Heart left ventricle (tissue), 16 donors: ENCODE measurements at regions of chr3 and their contacts with region 1.

Region 1: GRCh38 chr3:20039766-20040475 is at the start of gene KAT2B:
- DNase-seq: peak; percentile 84 to 92 (median 85)
- ATAC-seq: peak; percentile 68 to 84 (median 78)
- H3K4me3 ChIP-seq: peak within 1 kb of the TSS; percentile 59 to 95 (median 85)
- H3K27ac ChIP-seq: peak within 1 kb of the TSS; percentile 93 to 99 (median 98)
- H3K4me1 ChIP-seq: peaks cover 4 to 51% (median 40%) of the 10 kb centered on the region in 12 donors
- H3K27me3 ChIP-seq: no peaks in the 10 kb centered on the region
- CTCF ChIP-seq: peak; percentile 57 to 89 (median 71)
- POLR2A ChIP-seq: peak in 1 of 2 donors; percentile 48
- total RNA-seq, gene KAT2B: 45.9 to 82.8 (median 70.2) TPM

Region 2: DNA sequence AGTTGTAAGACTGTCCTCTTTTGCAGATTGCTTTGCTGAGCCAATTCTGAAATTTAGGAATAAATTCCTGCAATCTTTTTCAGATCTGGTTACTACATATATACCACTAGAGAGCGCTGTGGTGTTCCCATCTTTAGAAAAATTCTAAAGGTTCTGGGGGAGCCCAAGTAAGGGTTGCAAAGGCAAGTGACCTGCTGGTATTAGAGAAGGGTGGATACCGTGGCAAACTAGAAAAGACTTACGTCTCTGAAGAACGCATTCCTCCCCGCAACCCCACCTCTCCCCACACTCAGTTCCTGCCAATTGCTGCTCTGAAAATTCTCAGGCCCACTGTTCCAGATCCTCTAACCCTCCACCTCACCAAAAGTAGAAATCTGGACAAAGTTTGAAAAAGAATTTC is 154.5 kb before region 1 on chr3:
- intact Hi-C with region 1: loop called in 6 of 10 experiments (anchors 5 to 10 kb)
- DNase-seq: no peak
- ATAC-seq: peak in 1 of 4 donors; percentile 29
- H3K4me3 ChIP-seq: no peak overlapping the region
- H3K27ac ChIP-seq: no peak overlapping the region
- H3K4me1 ChIP-seq: peaks cover 0 to 18% (median 8%) of the 10 kb centered on the region in 12 donors
- H3K27me3 ChIP-seq: no peaks in the 10 kb centered on the region
- CTCF ChIP-seq: peak; percentile 36 to 68 (median 48)
- POLR2A ChIP-seq: no peak

Region 3: DNA sequence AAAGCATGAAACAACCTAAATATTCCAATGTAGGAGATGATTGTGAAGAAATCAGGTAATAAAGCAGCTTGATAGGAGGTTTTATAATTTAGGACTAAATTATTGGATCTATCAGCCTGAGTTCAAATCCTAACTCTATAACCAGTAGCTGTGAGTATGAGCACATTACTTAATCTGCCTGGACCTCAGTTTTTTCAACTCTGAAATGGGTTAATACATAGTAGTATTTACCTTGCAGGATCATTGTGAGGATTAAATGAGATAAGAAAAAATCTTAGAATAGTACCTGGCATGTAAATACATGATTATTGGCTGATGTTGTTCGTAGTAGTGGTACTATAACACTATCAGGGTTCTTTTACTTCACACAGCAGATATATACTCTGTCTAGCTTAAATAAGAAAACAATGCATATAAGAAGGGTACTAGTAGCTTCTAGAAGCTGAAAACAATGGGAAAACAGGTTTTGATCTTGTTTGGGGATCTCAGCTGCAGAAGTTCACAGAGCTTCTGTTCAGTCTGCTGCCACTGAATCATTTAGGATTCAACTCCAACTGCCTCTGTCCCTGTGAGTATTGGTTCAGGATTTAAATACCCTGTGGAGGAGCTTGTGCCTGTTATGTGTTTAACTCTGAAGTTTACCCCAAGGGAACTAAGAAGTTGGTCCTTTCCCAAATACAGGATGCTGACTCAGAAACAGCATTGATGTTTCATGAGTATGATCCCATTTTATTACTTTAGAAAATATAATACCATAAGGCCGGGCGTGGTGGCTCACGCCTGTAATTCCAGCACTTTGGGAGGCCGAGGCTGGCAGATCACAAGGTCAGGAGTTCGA is 34.5 kb after region 1 on chr3:
- intact Hi-C with region 1: loop called in 1 of 10 experiments (anchors 5 kb)
- DNase-seq: no peak
- ATAC-seq: no peak
- H3K4me3 ChIP-seq: no peak overlapping the region
- H3K27ac ChIP-seq: peak overlapping the region in 1 of 12 donors; percentile 13
- H3K4me1 ChIP-seq: peaks cover 0 to 27% (median 11%) of the 10 kb centered on the region in 12 donors
- H3K27me3 ChIP-seq: no peaks in the 10 kb centered on the region
- CTCF ChIP-seq: no peak
- POLR2A ChIP-seq: no peak

Region 4: GRCh38 chr3:20136231-20136630 is 96.3 kb after region 1 on chr3:
- intact Hi-C with region 1: loop called in 3 of 10 experiments (anchors 5 kb)
- DNase-seq: no peak
- ATAC-seq: no peak
- H3K4me3 ChIP-seq: no peak overlapping the region
- H3K27ac ChIP-seq: no peak overlapping the region
- H3K4me1 ChIP-seq: peaks cover 0 to 9% (median 1%) of the 10 kb centered on the region in 12 donors
- H3K27me3 ChIP-seq: no peaks in the 10 kb centered on the region
- CTCF ChIP-seq: no peak
- POLR2A ChIP-seq: no peak

Region 5: GRCh38 chr3:20160230-20160629 is 120.3 kb after region 1 on chr3:
- intact Hi-C with region 1: no loop called
- DNase-seq: no peak
- ATAC-seq: no peak
- H3K4me3 ChIP-seq: no peak overlapping the region
- H3K27ac ChIP-seq: peak overlapping the region in 3 of 12 donors; percentile 1 to 69 (median 16)
- H3K4me1 ChIP-seq: peaks cover 0 to 17% (median 3%) of the 10 kb centered on the region in 12 donors
- H3K27me3 ChIP-seq: no peaks in the 10 kb centered on the region
- CTCF ChIP-seq: no peak
- POLR2A ChIP-seq: no peak

Region 6: DNA sequence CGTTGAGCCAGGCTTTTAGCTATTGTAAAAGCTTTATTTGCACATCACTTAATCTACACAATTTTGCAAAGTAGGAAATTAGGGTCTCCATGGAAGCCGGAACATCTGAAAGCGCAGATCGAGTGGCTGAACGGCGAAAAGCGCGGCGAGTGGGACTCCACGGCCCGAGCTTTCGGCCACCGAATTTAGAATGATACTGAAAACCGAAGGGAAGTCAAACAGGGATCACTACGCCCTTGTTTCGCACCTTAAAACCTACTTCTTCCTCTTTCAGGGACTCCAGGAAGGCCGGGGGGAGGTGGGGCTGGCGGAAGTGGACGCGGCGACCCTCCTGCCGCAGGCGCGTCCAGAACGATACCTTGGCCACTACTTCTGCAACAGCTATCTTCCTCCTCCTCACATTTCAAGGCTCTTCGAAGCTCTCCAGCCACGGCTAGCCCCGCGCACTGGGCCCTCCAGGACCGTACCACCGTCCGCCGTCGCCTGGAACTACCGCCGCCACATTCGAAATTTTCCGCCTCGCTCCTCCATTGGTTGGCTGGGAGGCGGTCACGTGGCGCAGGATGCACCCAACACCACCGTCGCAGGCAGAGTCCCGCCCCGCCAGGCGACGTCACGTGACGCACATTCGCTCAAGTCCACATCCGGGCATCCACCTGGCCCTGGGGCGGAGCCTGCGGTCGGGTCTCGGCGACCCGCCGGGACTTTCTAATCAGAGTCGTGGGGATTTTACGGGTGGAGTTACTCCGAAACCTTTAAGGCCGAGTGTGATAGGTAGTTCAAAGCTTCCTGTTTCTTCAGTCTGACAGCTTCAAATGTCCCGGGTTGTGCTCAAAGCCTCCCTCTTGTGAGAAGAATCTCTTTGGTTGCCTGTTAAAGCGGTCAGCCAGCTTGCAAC is 146.0 kb after region 1 on chr3 and contains the start of gene SGO1:
- intact Hi-C with region 1: loop called in 8 of 10 experiments (anchors 2 to 10 kb)
- DNase-seq: peak; percentile 99 to 100 (median 99)
- ATAC-seq: peak; percentile 100
- H3K4me3 ChIP-seq: peak within 1 kb of the TSS; percentile 47 to 85 (median 66)
- H3K27ac ChIP-seq: peak within 1 kb of the TSS; percentile 77 to 98 (median 89)
- H3K4me1 ChIP-seq: peaks cover 0 to 21% (median 8%) of the 10 kb centered on the region in 12 donors
- H3K27me3 ChIP-seq: no peaks in the 10 kb centered on the region
- CTCF ChIP-seq: peak in 3 of 12 donors; percentile 8 to 22 (median 12)
- POLR2A ChIP-seq: peak; percentile 53 to 86
- total RNA-seq, gene SGO1: 0.12 to 2.8 (median 0.30) TPM in 5 of 9 donors, not detected in the others